Transverse colon (tissue), 4 donors: ENCODE measurements at regions of chr4 and their contacts with region 1.

Region 1: DNA sequence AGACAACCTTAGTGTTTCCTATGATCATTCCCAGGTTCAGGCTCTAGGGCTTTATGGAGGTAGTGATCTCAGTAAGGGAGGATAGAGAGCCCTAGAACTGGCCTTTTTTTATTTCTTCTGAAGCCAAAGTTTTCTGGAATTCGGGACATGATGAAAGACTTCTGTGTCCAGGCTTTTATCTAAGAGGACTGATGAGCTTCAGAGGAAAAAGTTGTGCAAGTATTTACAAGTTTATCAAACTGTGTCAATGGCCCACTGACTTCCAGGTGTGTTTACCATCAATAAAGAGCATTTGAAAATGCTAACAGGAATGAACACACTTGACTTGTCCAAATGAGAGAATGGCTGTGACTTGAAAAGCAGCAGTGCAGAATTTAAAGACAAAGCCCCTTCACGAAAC is 254.6 kb downstream of the DCTD start:
- DNase-seq: no peak
- H3K4me3 ChIP-seq: no peak overlapping the region
- H3K27ac ChIP-seq: no peak overlapping the region
- H3K4me1 ChIP-seq: no peaks in the 10 kb centered on the region
- H3K27me3 ChIP-seq: no peaks in the 10 kb centered on the region
- CTCF ChIP-seq: no peak
- EP300 ChIP-seq: no peak
- POLR2A ChIP-seq: no peak

Region 2: DNA sequence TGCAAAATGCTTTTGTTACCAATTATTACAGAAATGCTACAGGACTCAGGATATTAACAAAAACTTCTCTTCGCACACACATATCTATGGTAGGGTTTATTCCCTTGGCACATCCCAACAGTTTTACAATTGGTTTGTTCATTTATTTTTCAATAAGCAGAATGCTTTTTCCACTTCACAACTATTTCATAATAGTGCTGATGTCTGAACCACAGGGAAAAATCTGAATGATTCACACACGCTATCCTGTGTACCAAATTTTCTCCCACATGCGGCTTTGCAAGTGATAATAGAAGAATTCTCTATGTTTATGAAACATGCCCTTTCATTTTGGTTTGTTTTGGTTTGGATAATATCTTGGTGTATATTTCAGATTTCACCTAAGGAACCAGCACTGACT is 1145.1 kb before region 1 on chr4:
- in situ Hi-C with region 1: no loop called
- intact Hi-C with region 1: loop called (anchors 10 kb)
- DNase-seq: no peak
- H3K4me3 ChIP-seq: no peak overlapping the region
- H3K27ac ChIP-seq: no peak overlapping the region
- H3K4me1 ChIP-seq: no peaks in the 10 kb centered on the region
- H3K27me3 ChIP-seq: no peaks in the 10 kb centered on the region
- CTCF ChIP-seq: no peak
- EP300 ChIP-seq: no peak
- POLR2A ChIP-seq: no peak

Region 3: DNA sequence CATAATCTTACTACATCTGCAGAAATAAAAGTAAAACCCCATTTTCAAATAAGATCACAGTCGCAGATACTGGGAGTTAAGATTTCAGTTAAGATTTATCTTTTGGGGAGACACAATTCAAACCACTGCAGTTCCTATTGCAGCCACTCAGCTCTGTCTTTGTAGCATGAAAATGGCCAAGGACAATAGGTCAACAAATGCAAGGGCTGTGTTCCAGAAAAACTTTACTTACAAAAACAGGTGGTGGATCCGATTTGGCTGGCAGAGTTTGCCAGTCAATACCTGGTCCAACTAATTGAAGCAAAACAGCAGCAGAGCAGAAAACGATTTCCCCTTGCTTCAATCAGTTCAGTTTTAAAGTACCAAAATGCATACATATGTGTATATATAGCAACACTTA is 342.0 kb before region 1 on chr4:
- in situ Hi-C with region 1: no loop called
- intact Hi-C with region 1: loop called (anchors 5 kb)
- DNase-seq: no peak
- H3K4me3 ChIP-seq: no peak overlapping the region
- H3K27ac ChIP-seq: no peak overlapping the region
- H3K4me1 ChIP-seq: no peaks in the 10 kb centered on the region
- H3K27me3 ChIP-seq: no peaks in the 10 kb centered on the region
- CTCF ChIP-seq: no peak
- EP300 ChIP-seq: no peak
- POLR2A ChIP-seq: no peak

Region 4: GRCh38 chr4:182695842-182696241 is 33.3 kb after region 1 on chr4:
- in situ Hi-C with region 1: no loop called
- intact Hi-C with region 1: no loop called
- DNase-seq: no peak
- H3K4me3 ChIP-seq: no peak overlapping the region
- H3K27ac ChIP-seq: no peak overlapping the region
- H3K4me1 ChIP-seq: no peaks in the 10 kb centered on the region
- H3K27me3 ChIP-seq: peaks cover 13% of the 10 kb centered on the region
- CTCF ChIP-seq: no peak
- EP300 ChIP-seq: no peak
- POLR2A ChIP-seq: no peak